ENCODE measurements at regions of chr3 and their contacts with region 1.

Region 1: DNA sequence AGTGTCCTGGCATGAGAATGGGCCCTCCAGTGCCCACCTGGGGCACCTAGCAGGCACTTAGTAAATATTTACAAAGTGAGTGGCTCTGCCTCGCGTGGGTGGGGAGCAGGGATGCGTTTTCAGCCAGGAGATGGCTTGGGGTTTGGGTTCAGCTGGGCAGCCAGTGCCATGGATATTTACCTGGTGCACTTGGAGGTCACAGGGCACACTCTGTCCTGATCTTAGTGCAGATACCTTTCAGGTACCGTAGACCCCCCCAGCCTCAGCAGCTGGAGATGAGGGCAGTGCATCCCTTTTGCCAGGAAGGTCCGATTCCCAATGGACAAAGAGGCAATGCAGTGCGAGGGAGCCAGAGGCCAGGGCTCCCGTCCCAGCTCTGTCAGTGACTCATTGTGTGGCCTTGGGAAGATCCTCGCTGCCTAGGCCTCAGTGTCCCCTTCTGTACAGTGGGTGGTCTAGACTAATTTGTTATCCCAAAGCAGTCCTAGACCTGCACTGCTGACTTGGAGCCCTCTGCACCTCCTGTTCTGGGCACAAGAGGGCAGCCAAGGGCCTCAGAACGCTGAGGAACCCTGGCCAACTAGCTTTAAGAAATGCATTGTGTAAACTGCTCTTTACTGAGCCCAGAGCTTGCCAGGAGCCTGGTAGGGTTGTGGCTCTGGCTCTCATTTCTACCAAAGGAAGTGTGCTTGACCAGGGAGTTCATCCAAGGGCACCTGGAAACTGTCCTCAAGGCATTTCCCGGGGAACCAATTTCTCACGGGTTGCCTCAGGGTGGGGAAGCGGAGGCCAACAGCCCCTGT is 16.0 kb downstream of the HDAC11 start:
- DNase-seq: peak; percentile 84 to 90 (median 86)
- H3K4me3 ChIP-seq: no peak overlapping the region
- H3K27ac ChIP-seq: no peak overlapping the region
- H3K4me1 ChIP-seq: peaks cover 0 to 2% (median 0%) of the 10 kb centered on the region in 3 donors
- H3K27me3 ChIP-seq: no peaks in the 10 kb centered on the region
- CTCF ChIP-seq: peak; percentile 84

Region 2: DNA sequence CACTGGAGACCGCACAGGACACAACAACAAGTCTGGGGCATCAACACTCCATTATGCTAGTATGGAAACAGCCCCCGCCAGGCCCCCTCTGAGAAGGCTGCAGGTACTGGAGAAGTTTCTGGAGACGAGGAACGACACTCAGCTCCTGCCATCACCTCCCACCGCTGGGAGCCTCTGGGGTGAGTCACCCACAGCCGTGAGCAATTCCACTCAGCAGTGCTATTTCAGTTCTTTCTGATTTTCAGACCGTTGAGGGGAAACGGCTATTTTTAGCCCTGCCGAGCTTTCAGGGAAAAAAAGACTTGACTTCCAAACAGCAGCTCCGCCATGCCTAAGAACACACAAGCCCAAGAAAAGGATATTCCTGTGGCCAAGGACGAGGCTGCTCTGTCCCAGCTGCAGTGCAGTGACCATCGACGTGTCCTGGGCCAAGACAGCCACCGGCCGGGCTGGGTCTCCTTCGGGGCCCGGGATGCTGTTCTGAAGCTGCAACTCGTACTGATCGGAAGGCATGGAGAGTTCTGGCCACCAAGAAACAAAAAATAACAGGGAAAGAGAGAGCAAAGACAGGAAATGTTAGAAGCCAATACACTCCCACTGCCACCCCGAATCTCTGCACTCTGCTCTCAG is 116.8 kb before region 1 on chr3:
- intact Hi-C with region 1: no loop called
- DNase-seq: peak in 1 of 5 donors; percentile 13
- H3K4me3 ChIP-seq: no peak overlapping the region
- H3K27ac ChIP-seq: no peak overlapping the region
- H3K4me1 ChIP-seq: no peaks in the 10 kb centered on the region
- H3K27me3 ChIP-seq: no peaks in the 10 kb centered on the region
- CTCF ChIP-seq: no peak

Region 3: GRCh38 chr3:13648060-13649001 is 152.2 kb after region 1 on chr3:
- intact Hi-C with region 1: loop called (anchors 5 kb)
- DNase-seq: peak; percentile 90 to 93 (median 92)
- H3K4me3 ChIP-seq: no peak overlapping the region
- H3K27ac ChIP-seq: no peak overlapping the region
- H3K4me1 ChIP-seq: peaks cover 0 to 3% (median 0%) of the 10 kb centered on the region in 3 donors
- H3K27me3 ChIP-seq: no peaks in the 10 kb centered on the region
- CTCF ChIP-seq: peak; percentile 95

Measured in kidney (tissue), 22 donors.